ENCODE measurements at regions of chr7 and their contacts with region 1.

Region 1: DNA sequence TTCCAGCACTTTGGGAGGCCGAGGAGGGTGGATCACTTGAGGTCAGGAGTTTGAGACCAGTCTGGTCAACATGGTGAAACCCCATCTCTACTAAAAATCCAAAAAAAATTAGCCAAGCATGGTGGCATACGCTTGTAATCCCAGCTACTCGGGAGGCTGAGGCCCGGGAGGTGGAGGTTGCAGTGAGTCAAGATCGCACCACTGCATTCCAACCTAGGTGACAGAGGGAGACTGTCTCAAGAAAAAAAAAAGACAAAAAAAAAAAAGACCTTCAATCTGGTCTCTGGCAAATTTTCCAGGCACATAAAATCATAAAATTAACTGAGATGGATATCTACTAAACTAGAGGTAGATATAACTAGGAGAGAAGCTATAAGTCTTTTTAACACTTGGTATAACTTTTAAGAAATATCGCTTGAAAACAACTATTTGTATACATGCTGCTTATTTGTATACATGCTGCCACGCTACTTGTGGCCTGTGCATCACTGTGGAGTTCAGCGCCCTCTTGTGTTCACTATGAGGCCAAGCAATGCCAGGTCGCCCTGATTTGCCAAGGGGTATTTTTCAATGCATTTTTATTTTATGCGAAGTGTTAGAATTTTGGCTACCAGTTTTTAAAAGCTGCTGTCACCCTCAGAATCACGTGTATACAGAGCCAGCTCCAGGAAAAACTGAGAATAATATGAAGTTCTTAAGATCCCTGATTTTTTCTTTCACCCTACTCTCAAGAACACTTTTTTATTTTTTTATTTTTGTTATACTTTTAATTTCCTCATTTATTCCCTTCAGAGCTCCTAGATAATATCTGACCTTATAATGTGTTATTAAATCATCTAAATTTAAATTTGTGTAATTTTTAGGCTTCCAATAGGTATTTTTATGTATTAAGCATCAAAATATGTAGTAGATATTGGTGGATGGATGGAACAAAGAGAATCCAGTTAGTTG is 26.7 kb downstream of the CYCS start:
- DNase-seq: peak; percentile 74
- ATAC-seq: peak; percentile 83
- H3K4me3 Mint-ChIP-seq: no peak overlapping the region
- H3K27ac Mint-ChIP-seq: no peak overlapping the region
- H3K4me1 Mint-ChIP-seq: peaks cover 4% of the 10 kb centered on the region
- H3K27me3 Mint-ChIP-seq: peaks cover 11% of the 10 kb centered on the region

Region 2: GRCh38 chr7:25014756-25015155 is 83.6 kb before region 1 on chr7:
- CTCF ChIA-PET with region 1: no interaction called
- POLR2A ChIA-PET with region 1: no interaction called
- DNase-seq: no peak
- ATAC-seq: no peak
- H3K4me3 Mint-ChIP-seq: no peak overlapping the region
- H3K27ac Mint-ChIP-seq: no peak overlapping the region
- H3K4me1 Mint-ChIP-seq: no peaks in the 10 kb centered on the region
- H3K27me3 Mint-ChIP-seq: no peaks in the 10 kb centered on the region

Region 3: GRCh38 chr7:25069900-25070443 is 28.4 kb before region 1 on chr7:
- CTCF ChIA-PET with region 1: interaction called, 24 read pairs
- POLR2A ChIA-PET with region 1: no interaction called
- DNase-seq: peak; percentile 71
- ATAC-seq: peak; percentile 76
- H3K4me3 Mint-ChIP-seq: no peak overlapping the region
- H3K27ac Mint-ChIP-seq: no peak overlapping the region
- H3K4me1 Mint-ChIP-seq: peaks cover 11% of the 10 kb centered on the region
- H3K27me3 Mint-ChIP-seq: peaks cover 9% of the 10 kb centered on the region

Region 4: DNA sequence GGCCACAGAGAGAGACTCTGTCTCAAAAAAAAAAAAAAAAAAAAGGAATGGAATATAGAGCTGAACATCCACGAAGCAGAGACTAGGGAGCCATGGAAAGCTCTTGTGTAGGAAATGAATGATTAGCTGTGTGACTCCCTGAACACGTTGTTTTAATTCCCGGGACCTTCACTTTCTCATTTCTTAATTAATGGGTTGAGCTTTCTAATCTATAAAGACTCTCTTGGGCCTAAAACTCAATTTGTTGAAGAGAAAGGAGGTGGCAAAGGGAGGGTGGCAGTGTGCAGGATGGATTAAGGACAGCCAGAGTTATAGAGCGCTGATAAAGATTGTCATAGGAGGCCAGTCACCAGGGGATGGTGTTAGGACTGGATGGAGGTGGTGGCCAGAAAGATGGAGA is 21.3 kb before region 1 on chr7:
- CTCF ChIA-PET with region 1: interaction called, 32 read pairs
- POLR2A ChIA-PET with region 1: no interaction called
- DNase-seq: no peak
- ATAC-seq: no peak
- H3K4me3 Mint-ChIP-seq: no peak overlapping the region
- H3K27ac Mint-ChIP-seq: no peak overlapping the region
- H3K4me1 Mint-ChIP-seq: peaks cover 4% of the 10 kb centered on the region
- H3K27me3 Mint-ChIP-seq: peaks cover 20% of the 10 kb centered on the region

Region 5: GRCh38 chr7:25087855-25088254 is 10.5 kb before region 1 on chr7:
- CTCF ChIA-PET with region 1: interaction called, 32 read pairs
- POLR2A ChIA-PET with region 1: no interaction called
- DNase-seq: no peak
- ATAC-seq: no peak
- H3K4me3 Mint-ChIP-seq: no peak overlapping the region
- H3K27ac Mint-ChIP-seq: no peak overlapping the region
- H3K4me1 Mint-ChIP-seq: no peaks in the 10 kb centered on the region
- H3K27me3 Mint-ChIP-seq: peaks cover 10% of the 10 kb centered on the region

Region 6: DNA sequence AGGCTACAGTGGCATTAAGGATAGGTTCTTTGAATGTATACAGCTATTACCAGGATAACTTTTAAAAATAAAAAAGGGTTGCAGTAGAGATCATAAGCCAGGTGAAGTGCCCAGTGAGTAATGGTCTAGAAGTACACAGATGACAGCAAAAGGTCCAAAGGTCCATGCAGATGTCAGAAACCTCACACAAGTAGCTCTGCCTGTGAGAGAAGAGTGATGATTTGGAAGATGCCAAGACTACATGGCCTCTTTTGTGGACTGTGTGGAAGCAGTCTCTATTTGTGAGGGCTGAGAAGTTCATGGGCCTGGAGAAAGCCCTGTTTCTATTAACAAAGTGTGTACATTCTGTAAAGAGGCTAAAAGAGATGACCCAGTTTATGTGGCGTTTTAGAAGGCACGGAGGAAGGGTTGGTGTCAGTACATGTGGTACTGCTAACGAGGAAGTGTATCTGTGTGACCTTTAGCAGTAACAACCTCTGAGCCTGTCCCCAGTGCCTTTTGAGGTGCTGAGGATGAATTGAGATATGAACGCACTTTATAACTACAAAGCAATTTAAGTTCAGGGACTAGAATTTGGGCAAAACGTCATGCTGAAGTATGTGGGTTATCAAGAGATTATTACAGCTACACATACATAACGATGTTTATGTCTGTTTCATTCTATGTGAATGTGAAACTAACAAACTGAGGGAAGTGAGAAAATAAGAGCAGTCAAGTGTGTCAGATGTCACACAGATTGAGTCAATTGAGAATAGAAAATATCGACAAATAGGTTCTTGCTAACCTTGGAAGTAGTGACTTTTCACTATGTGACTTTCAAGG is 19.1 kb after region 1 on chr7:
- CTCF ChIA-PET with region 1: interaction called, 16 read pairs
- POLR2A ChIA-PET with region 1: no interaction called
- DNase-seq: no peak
- ATAC-seq: peak; percentile 9
- H3K4me3 Mint-ChIP-seq: no peak overlapping the region
- H3K27ac Mint-ChIP-seq: peak overlapping the region; percentile 31
- H3K4me1 Mint-ChIP-seq: peaks cover 8% of the 10 kb centered on the region
- H3K27me3 Mint-ChIP-seq: no peaks in the 10 kb centered on the region

Region 7: GRCh38 chr7:25125137-25125946 is 27.0 kb after region 1 on chr7 and contains the start of gene CYCS:
- CTCF ChIA-PET with region 1: interaction called, 21 read pairs
- POLR2A ChIA-PET with region 1: interaction called, 3 read pairs
- DNase-seq: peak; percentile 100
- ATAC-seq: peak; percentile 95
- H3K4me3 Mint-ChIP-seq: peak within 1 kb of the TSS; percentile 86
- H3K27ac Mint-ChIP-seq: peak within 1 kb of the TSS; percentile 95
- H3K4me1 Mint-ChIP-seq: peaks cover 38% of the 10 kb centered on the region
- H3K27me3 Mint-ChIP-seq: no peaks in the 10 kb centered on the region
- total RNA-seq, gene CYCS: 153 to 157 TPM

Region 8: GRCh38 chr7:25187932-25188331 is 89.6 kb after region 1 on chr7:
- CTCF ChIA-PET with region 1: no interaction called
- POLR2A ChIA-PET with region 1: no interaction called
- DNase-seq: no peak
- ATAC-seq: no peak
- H3K4me3 Mint-ChIP-seq: no peak overlapping the region
- H3K27ac Mint-ChIP-seq: no peak overlapping the region
- H3K4me1 Mint-ChIP-seq: no peaks in the 10 kb centered on the region
- H3K27me3 Mint-ChIP-seq: peaks cover 16% of the 10 kb centered on the region

Region 9: GRCh38 chr7:25611196-25611595 is 512.8 kb after region 1 on chr7:
- CTCF ChIA-PET with region 1: no interaction called
- POLR2A ChIA-PET with region 1: no interaction called
- DNase-seq: no peak
- ATAC-seq: no peak
- H3K4me3 Mint-ChIP-seq: no peak overlapping the region
- H3K27ac Mint-ChIP-seq: no peak overlapping the region
- H3K4me1 Mint-ChIP-seq: peaks cover 17% of the 10 kb centered on the region
- H3K27me3 Mint-ChIP-seq: no peaks in the 10 kb centered on the region